Activated T-helper 1 cell treated with anti-CD3 and anti-CD28 coated beads, Interleukin-12 subunit alpha, Interleukin-12 subunit beta, Interleukin-2, Interleukin-4 antibody, amounts not matched to agents 30 ng/mL and 10 ng/mL and 1 ng/mL, durations not matched to agents 14 hours and 24 hours and 36 hours (primary cell): ENCODE measurements at regions of chr11 and their contacts with region 1.

Region 1: GRCh38 chr11:117807482-117808327 is 10.7 kb upstream of the DSCAML1 start:
- DNase-seq: peak; percentile 53
- H3K4me3 Mint-ChIP-seq: no peak overlapping the region
- H3K27ac Mint-ChIP-seq: peak overlapping the region; percentile 30
- H3K4me1 Mint-ChIP-seq: peaks cover 33% of the 10 kb centered on the region
- H3K27me3 Mint-ChIP-seq: peaks cover 5% of the 10 kb centered on the region

Region 2: GRCh38 chr11:117828611-117829368 is 21.1 kb after region 1 on chr11:
- intact Hi-C with region 1: no loop called
- DNase-seq: peak; percentile 79
- H3K4me3 Mint-ChIP-seq: peak overlapping the region; percentile 37
- H3K27ac Mint-ChIP-seq: peak overlapping the region; percentile 86
- H3K4me1 Mint-ChIP-seq: peaks cover 73% of the 10 kb centered on the region
- H3K27me3 Mint-ChIP-seq: no peaks in the 10 kb centered on the region

Region 3: GRCh38 chr11:117843666-117844484 is 36.2 kb after region 1 on chr11:
- intact Hi-C with region 1: loop called (anchors 5 kb)
- DNase-seq: peak; percentile 63
- H3K4me3 Mint-ChIP-seq: no peak overlapping the region
- H3K27ac Mint-ChIP-seq: no peak overlapping the region
- H3K4me1 Mint-ChIP-seq: no peaks in the 10 kb centered on the region
- H3K27me3 Mint-ChIP-seq: peaks cover 17% of the 10 kb centered on the region